HCT116 (cell line): ENCODE measurements at regions of chr1 and their contacts with region 1.

Region 1: DNA sequence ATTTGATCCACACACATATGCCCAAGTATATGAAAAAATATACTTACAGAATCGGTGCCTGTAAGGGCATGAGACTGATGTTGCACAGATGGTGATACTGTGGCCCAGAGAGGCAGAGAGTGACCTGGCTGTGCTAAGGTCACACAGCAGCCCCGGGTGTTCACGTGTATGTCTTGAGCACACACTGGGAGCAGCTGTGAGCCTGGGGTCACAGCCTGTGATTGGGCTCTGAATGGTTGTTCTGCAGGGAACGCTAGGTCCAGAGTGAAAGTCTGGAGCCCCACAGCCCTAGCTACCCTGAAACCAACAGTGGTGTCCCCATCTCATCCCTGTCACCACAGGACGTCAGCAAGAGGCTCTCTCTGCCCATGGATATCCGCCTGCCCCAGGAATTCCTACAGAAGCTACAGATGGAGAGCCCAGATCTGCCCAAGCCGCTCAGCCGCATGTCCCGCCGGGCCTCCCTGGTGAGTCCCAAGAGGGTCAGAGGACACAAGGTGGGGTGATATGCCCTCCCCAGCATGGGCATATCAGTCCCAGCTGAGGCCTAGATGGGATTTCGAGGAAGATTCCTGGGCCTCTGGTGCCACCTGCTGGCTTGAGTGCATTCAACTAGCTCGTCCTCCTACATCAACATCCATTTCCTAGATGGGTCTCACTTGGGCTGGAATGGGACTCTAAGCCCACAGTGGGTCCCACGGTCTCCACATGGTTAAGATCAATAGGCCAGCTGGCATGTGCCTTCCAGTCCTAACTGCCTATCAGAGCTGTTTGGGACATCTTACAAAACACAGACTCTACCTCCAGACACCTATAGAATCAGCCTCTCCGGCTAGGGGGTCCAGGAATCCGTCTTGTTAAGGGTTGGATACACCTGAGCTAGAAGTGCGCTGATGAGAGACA is 19.7 kb downstream of the CDK18 start:
- DNase-seq: peak; percentile 46
- ATAC-seq: peak; percentile 71
- H3K4me3 ChIP-seq: no peak overlapping the region
- H3K27ac ChIP-seq: no peak overlapping the region
- H3K4me1 ChIP-seq: peaks cover 0 to 11% of the 10 kb centered on the region in 2 experiments; a peak in 2 of 4 replicates
- H3K27me3 ChIP-seq: no peaks in the 10 kb centered on the region
- CTCF ChIP-seq: peak; percentile 76 to 93 (median 84)
- POLR2A ChIP-seq: no peak
- RAD21 ChIP-seq: peak; percentile 97

Region 2: GRCh38 chr1:205335643-205336091 is 188.5 kb before region 1 on chr1:
- CTCF ChIA-PET with region 1: interaction called, 13 read pairs
- POLR2A ChIA-PET with region 1: no interaction called
- RAD21 ChIA-PET with region 1: interaction called in 1 of 2 experiments, 4 read pairs
- intact Hi-C with region 1: loop called (anchors 1 kb)
- DNase-seq: peak; percentile 79
- ATAC-seq: peak; percentile 99
- H3K4me3 ChIP-seq: no peak overlapping the region
- H3K27ac ChIP-seq: no peak overlapping the region
- H3K4me1 ChIP-seq: peaks cover 4 to 6% of the 10 kb centered on the region in 2 experiments; a peak in 3 of 4 replicates
- H3K27me3 ChIP-seq: no peaks in the 10 kb centered on the region
- CTCF ChIP-seq: peak; percentile 99 to 100 (median 99)
- POLR2A ChIP-seq: no peak
- RAD21 ChIP-seq: peak; percentile 94

Region 3: GRCh38 chr1:205396967-205397616 is 127.0 kb before region 1 on chr1:
- CTCF ChIA-PET with region 1: interaction called, 51 read pairs
- POLR2A ChIA-PET with region 1: no interaction called
- RAD21 ChIA-PET with region 1: interaction called, 5 to 8 read pairs
- intact Hi-C with region 1: loop called (anchors 1 kb)
- DNase-seq: peak; percentile 77
- ATAC-seq: peak; percentile 99
- H3K4me3 ChIP-seq: no peak overlapping the region
- H3K27ac ChIP-seq: no peak overlapping the region
- H3K4me1 ChIP-seq: peaks cover 0 to 8% of the 10 kb centered on the region in 2 experiments; a peak in 2 of 4 replicates
- H3K27me3 ChIP-seq: no peaks in the 10 kb centered on the region
- CTCF ChIP-seq: peak; percentile 82 to 97 (median 93)
- POLR2A ChIP-seq: no peak
- RAD21 ChIP-seq: peak; percentile 99

Region 4: GRCh38 chr1:205584732-205585131 is 60.6 kb after region 1 on chr1:
- CTCF ChIA-PET with region 1: no interaction called
- POLR2A ChIA-PET with region 1: no interaction called
- RAD21 ChIA-PET with region 1: no interaction called
- intact Hi-C with region 1: no loop called
- DNase-seq: no peak
- ATAC-seq: no peak
- H3K4me3 ChIP-seq: no peak overlapping the region
- H3K27ac ChIP-seq: no peak overlapping the region
- H3K4me1 ChIP-seq: no peaks in the 10 kb centered on the region
- H3K27me3 ChIP-seq: no peaks in the 10 kb centered on the region
- CTCF ChIP-seq: peak in 2 of 3 experiments; percentile 41 to 51; a peak in 4 of 6 replicates
- POLR2A ChIP-seq: no peak
- RAD21 ChIP-seq: no peak